CD8-positive, alpha-beta memory T cell (primary cell): ENCODE measurements at regions of chr5 and their contacts with region 1.

Region 1: GRCh38 chr5:170434966-170435605 is 45.9 kb upstream of the KCNMB1 start:
- DNase-seq: peak; percentile 16 to 56 (median 36)
- H3K4me3 ChIP-seq: no peak overlapping the region
- H3K4me3 Mint-ChIP-seq: no peak overlapping the region
- H3K27ac ChIP-seq: no peak overlapping the region
- H3K27ac Mint-ChIP-seq: peak overlapping the region in 1 of 8 donors; percentile 78
- H3K4me1 ChIP-seq: no peaks in the 10 kb centered on the region
- H3K4me1 Mint-ChIP-seq: peaks cover 0 to 2% (median 0%) of the 10 kb centered on the region in 3 donors
- H3K27me3 ChIP-seq: no peaks in the 10 kb centered on the region
- H3K27me3 Mint-ChIP-seq: peaks cover 2 to 14% of the 10 kb centered on the region in 2 donors

Region 2: GRCh38 chr5:170491479-170491878 is 56.4 kb after region 1 on chr5:
- CTCF ChIA-PET with region 1: no interaction called
- POLR2A ChIA-PET with region 1: no interaction called
- DNase-seq: no peak
- H3K4me3 ChIP-seq: no peak overlapping the region
- H3K4me3 Mint-ChIP-seq: no peak overlapping the region
- H3K27ac ChIP-seq: no peak overlapping the region
- H3K27ac Mint-ChIP-seq: no peak overlapping the region
- H3K4me1 ChIP-seq: no peaks in the 10 kb centered on the region
- H3K4me1 Mint-ChIP-seq: no peaks in the 10 kb centered on the region
- H3K27me3 ChIP-seq: no peaks in the 10 kb centered on the region
- H3K27me3 Mint-ChIP-seq: peaks cover 5 to 35% of the 10 kb centered on the region in 2 donors

Region 3: GRCh38 chr5:170633235-170634081 is 198.4 kb after region 1 on chr5:
- CTCF ChIA-PET with region 1: interaction called, 10 read pairs
- POLR2A ChIA-PET with region 1: no interaction called
- DNase-seq: peak in 1 of 5 donors; percentile 46
- H3K4me3 ChIP-seq: peak overlapping the region; percentile 56
- H3K4me3 Mint-ChIP-seq: peak overlapping the region; percentile 44 to 89 (median 75)
- H3K27ac ChIP-seq: no peak overlapping the region
- H3K27ac Mint-ChIP-seq: peak overlapping the region in 6 of 8 donors; percentile 52 to 88 (median 78)
- H3K4me1 ChIP-seq: peaks cover 10% of the 10 kb centered on the region
- H3K4me1 Mint-ChIP-seq: peaks cover 20 to 21% (median 21%) of the 10 kb centered on the region in 3 donors
- H3K27me3 ChIP-seq: no peaks in the 10 kb centered on the region
- H3K27me3 Mint-ChIP-seq: peaks cover 17 to 19% of the 10 kb centered on the region in 2 donors